ENCODE measurements at regions of chrX and their contacts with region 1.

Region 1: GRCh38 chrX:74343343-74344279 is 39.6 kb downstream of the ZCCHC13 start:
- DNase-seq: peak in 1 of 2 donors; percentile 63
- ATAC-seq: peak; percentile 38 to 99 (median 78)
- H3K4me3 ChIP-seq: no peak overlapping the region
- H3K27ac ChIP-seq: no peak overlapping the region
- H3K4me1 ChIP-seq: peaks cover 0 to 12% (median 0%) of the 10 kb centered on the region in 9 donors
- H3K27me3 ChIP-seq: peaks cover 0 to 13% (median 0%) of the 10 kb centered on the region in 7 donors
- CTCF ChIP-seq: peak; percentile 24 to 69 (median 60)

Region 2: GRCh38 chrX:73850124-73851013 is 493.2 kb before region 1 on chrX:
- intact Hi-C with region 1: loop called in 9 of 10 experiments (anchors 2 to 5 kb)
- DNase-seq: no peak
- ATAC-seq: peak in 1 of 8 donors; percentile 2
- H3K4me3 ChIP-seq: peak overlapping the region in 3 of 10 donors; percentile 17 to 64 (median 21)
- H3K27ac ChIP-seq: no peak overlapping the region
- H3K4me1 ChIP-seq: peaks cover 0 to 38% (median 0%) of the 10 kb centered on the region in 9 donors
- H3K27me3 ChIP-seq: no peaks in the 10 kb centered on the region
- CTCF ChIP-seq: peak in 2 of 9 donors; percentile 17 to 27

Region 3: DNA sequence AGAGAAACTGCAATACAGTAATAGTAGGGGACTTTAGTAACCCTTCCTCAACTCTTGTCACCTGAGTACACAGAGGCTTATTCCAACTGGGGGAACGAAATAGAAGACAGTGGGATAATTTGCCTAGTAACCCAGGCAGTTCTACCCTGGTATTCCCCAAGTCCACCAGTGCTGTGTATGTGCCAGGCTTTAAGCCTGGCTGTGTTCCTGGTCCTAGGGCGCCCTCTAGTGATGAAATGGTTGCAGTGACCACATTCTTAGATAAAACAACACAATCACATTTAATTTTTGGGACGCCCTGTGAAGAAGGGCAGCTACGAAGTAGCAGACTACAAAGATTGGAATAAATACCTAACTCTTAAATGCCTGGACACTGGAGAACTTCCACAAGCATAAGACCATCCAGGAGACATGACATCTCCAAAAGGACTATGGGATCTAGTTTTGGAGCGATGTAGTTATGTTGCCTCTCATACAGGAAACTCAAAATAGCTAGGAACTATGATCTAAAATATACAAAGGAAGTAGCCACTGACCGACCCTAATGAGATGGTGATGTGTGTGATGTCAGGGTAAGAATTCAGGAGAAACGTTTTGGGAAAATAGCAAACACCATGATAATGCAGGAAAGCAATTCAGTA is 328.1 kb before region 1 on chrX:
- intact Hi-C with region 1: loop called in 2 of 10 experiments (anchors 5 to 10 kb)
- DNase-seq: peak in 1 of 2 donors; percentile 31
- ATAC-seq: peak; percentile 46 to 91 (median 72)
- H3K4me3 ChIP-seq: no peak overlapping the region
- H3K27ac ChIP-seq: no peak overlapping the region
- H3K4me1 ChIP-seq: no peaks in the 10 kb centered on the region
- H3K27me3 ChIP-seq: no peaks in the 10 kb centered on the region
- CTCF ChIP-seq: peak; percentile 34 to 89 (median 70)

Region 4: DNA sequence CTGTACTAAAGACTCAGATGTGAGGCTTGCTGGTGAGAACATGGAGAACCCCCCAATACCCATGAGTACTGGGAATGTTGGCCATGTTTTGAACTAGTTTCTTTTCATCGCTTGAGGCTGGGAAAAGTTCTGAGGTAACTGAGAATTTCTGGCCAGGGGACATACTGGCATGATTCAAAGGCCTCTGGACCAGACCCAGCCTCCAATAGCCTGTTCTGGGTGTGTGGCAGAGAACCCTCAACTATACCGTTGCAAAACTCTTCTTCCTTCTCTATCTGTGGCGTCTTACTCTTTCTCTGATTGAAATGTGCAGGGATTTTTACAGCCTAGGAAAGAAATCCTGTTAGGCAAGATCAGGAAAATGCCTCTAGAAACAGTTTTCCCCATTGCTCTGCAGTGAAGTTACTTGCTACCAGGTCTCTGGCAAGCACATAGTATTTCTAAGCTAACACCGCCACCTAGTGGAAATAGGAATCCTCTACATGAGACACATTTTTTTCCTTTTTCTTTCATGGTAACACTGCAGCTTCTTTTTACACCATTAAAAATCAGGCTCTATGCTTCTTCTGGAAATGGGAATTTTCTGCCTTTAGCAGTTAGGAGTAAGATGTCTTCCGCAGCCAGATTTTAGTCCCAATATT is 210.3 kb before region 1 on chrX:
- intact Hi-C with region 1: loop called in 4 of 10 experiments (anchors 5 to 10 kb)
- DNase-seq: peak in 1 of 2 donors; percentile 13
- ATAC-seq: peak in 7 of 8 donors; percentile 49 to 78 (median 70)
- H3K4me3 ChIP-seq: no peak overlapping the region
- H3K27ac ChIP-seq: no peak overlapping the region
- H3K4me1 ChIP-seq: no peaks in the 10 kb centered on the region
- H3K27me3 ChIP-seq: peaks cover 0 to 25% (median 0%) of the 10 kb centered on the region in 7 donors
- CTCF ChIP-seq: peak; percentile 39 to 85 (median 67)

Region 5: GRCh38 chrX:74232859-74233258 is 110.8 kb before region 1 on chrX:
- intact Hi-C with region 1: loop called in 1 of 10 experiments (anchors 5 kb)
- DNase-seq: no peak
- ATAC-seq: no peak
- H3K4me3 ChIP-seq: no peak overlapping the region
- H3K27ac ChIP-seq: no peak overlapping the region
- H3K4me1 ChIP-seq: peaks cover 0 to 4% (median 0%) of the 10 kb centered on the region in 9 donors
- H3K27me3 ChIP-seq: no peaks in the 10 kb centered on the region
- CTCF ChIP-seq: peak in 1 of 9 donors; percentile 26

Measured in heart right ventricle (tissue), 16 donors.